Breast epithelium (tissue), 4 donors: ENCODE measurements at regions of chr12 and their contacts with region 1.

Region 1: DNA sequence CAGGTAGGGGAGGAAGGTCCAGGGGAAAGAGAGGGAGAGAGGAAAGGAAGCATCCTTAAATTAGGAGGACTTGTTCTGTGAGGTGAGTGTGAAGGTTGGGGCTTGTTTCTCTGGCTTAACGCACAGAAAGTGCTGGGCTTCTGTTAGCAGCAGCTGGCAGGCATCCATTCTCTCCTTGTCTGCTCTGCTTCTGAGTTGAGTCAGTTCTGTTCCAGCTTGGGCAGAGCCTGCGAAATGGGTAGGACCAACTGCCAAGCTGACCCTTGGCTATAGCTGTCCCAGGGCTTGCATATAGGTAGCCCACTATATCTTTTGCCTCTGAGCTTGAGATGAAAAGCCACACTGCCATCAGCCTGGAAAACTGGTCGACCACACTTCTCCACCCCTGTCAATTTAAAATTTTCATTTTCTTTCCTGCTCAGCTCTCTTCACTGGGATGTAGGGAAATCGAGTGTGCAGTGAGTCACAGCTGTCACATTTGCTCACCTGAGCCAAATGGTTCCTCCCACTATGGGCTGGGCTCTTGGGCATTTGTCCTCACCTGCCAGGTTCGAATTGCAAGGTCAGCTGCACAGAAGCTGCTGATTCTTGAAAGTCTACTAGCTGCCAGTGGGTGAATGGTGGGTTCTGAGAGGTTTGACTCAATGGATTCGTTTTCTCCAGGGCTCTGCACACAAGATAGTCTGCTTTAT is 256.4 kb upstream of the PWP1 start:
- DNase-seq: peak in 1 of 2 donors; percentile 26
- H3K4me3 ChIP-seq: no peak overlapping the region
- H3K27ac ChIP-seq: no peak overlapping the region
- H3K4me1 ChIP-seq: no peaks in the 10 kb centered on the region
- H3K27me3 ChIP-seq: no peaks in the 10 kb centered on the region
- CTCF ChIP-seq: no peak
- POLR2A ChIP-seq: no peak

Region 2: DNA sequence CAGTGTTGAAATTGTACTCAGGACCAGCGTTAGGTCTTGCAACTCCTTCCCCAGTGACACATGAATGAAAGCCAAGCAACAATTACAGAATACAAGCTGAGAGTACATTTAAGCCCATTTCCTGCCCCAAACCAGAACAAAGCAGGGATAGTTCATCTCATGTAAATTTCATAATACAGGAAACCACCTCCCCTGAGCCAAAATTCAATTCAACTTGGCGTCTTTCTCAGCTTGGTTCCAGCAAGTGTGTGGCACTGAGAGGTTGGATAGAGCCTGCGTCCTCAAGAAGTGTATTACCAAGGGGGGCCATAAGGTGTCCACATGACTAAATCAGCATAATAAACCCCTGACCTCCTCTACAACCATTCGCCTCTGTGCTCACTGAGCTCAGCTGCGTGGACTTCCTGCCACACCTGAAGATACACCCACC is 56.9 kb before region 1 on chr12:
- intact Hi-C with region 1: no loop called
- DNase-seq: peak in 1 of 2 donors; percentile 56
- H3K4me3 ChIP-seq: no peak overlapping the region
- H3K27ac ChIP-seq: no peak overlapping the region
- H3K4me1 ChIP-seq: peaks cover 0 to 6% of the 10 kb centered on the region in 2 donors
- H3K27me3 ChIP-seq: no peaks in the 10 kb centered on the region
- CTCF ChIP-seq: no peak
- POLR2A ChIP-seq: no peak

Region 3: DNA sequence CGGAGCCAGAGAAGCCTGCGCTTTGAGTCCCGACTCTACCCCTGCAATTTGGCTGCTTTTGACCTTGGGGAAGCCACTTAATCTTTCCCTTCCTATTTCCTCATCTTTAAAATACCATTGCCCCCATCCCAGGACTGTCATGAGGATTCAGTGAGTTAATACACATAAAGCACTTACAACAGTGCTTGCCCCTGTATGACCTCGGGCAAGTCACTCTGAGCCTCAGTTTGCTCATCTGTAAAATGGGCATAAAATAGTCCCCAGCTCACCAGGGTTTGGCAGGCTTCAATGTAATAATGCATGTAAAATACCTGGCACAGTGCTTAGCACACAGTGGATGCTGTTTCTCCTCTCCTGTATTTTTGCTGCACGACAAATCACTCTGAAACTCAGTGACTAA is 22.2 kb before region 1 on chr12:
- intact Hi-C with region 1: loop called (anchors 1 kb)
- DNase-seq: no peak
- H3K4me3 ChIP-seq: no peak overlapping the region
- H3K27ac ChIP-seq: no peak overlapping the region
- H3K4me1 ChIP-seq: no peaks in the 10 kb centered on the region
- H3K27me3 ChIP-seq: no peaks in the 10 kb centered on the region
- CTCF ChIP-seq: no peak
- POLR2A ChIP-seq: no peak